Activated T-helper 2 cell treated with anti-CD3 and anti-CD28 coated beads, Interferon-gamma antibody, Interleukin-2, Interleukin-4, amounts not matched to agents 10 μg/mL and 5 μg/mL and 100 μg/mL, durations not matched to agents 14 hours and 24 hours and 36 hours (primary cell): ENCODE measurements at regions of chr3 and their contacts with region 1.

Region 1: GRCh38 chr3:105827959-105828358 is 40.9 kb downstream of the CBLB start:
- DNase-seq: no peak
- H3K4me3 Mint-ChIP-seq: peak overlapping the region; percentile 37
- H3K27ac Mint-ChIP-seq: peak overlapping the region; percentile 100
- H3K4me1 Mint-ChIP-seq: peaks cover 80% of the 10 kb centered on the region
- H3K27me3 Mint-ChIP-seq: no peaks in the 10 kb centered on the region

Region 2: DNA sequence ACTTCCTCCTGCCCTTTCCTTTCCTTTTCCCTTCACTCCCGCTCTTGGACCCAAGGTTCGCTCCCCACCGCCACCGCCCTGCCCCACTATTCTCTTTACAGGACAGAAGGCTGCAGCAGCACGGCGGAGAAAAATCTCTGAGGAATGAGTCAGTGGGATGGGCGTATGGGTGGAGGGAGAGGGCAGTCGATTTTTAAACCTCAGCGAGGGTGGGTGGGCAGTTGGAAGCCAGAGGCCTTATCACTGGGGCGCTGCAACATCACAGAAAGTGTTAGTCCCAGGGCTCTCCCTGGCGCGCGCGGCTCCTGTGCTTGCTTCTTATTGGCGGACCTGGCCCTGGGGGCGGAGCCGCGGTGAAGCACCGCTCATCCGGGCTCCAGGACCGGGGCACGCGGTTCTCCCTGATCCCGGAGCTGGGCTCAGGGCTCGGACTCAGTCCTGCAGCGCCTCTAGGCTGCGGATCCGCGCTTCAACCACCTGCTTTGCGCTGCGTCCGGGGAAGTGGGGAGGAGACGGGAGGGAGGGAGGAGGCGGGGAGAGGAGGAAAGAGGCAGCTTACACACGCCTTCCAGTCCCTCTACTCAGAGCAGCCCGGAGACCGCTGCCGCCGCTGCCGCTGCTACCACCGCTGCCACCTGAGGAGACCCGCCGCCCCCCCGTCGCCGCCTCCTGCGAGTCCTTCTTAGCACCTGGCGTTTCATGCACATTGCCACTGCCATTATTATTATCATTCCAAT is 461.5 kb before region 1 on chr3 and contains the start of gene ALCAM:
- intact Hi-C with region 1: loop called (anchors 5 kb)
- DNase-seq: peak; percentile 77
- H3K4me3 Mint-ChIP-seq: peak within 1 kb of the TSS; percentile 94
- H3K27ac Mint-ChIP-seq: peak within 1 kb of the TSS; percentile 100
- H3K4me1 Mint-ChIP-seq: peaks cover 44% of the 10 kb centered on the region
- H3K27me3 Mint-ChIP-seq: peaks cover 22% of the 10 kb centered on the region
- total RNA-seq, gene ALCAM: 36.7 and 37.3 TPM in 2 replicates

Region 3: DNA sequence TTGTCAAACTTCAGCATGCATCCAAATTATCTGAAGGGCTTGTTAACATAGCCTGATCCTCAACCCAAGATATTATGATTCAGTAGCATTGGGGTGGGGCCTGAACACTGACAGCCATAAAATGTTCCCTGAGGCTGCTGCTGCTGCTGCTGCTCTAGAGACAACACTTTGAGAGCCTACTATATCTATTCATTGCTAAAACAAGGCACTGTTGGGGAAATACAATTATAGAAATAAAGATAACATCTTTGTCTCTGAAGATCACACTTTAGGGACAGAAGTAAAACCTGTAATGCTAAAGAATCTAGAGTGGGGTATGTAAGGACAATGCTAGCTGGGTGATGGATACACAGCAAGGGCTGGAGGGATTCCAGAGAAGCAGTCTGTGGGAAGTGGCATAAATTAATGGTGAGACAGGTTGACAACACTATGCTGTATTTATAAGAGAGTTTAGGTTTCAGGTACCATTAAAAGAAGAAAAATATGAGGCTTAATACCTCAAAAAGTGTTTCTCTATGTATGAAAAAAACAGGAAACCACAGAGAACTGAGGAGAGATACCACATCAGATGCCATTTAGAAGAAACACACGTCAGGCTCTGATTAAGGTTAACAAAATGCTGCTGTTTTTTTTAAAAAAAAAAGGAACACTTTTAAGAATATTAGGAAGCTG is 75.1 kb before region 1 on chr3:
- intact Hi-C with region 1: loop called (anchors 1 kb)
- DNase-seq: peak; percentile 39
- H3K4me3 Mint-ChIP-seq: peak overlapping the region; percentile 48
- H3K27ac Mint-ChIP-seq: peak overlapping the region; percentile 95
- H3K4me1 Mint-ChIP-seq: peaks cover 70% of the 10 kb centered on the region
- H3K27me3 Mint-ChIP-seq: no peaks in the 10 kb centered on the region

Region 4: DNA sequence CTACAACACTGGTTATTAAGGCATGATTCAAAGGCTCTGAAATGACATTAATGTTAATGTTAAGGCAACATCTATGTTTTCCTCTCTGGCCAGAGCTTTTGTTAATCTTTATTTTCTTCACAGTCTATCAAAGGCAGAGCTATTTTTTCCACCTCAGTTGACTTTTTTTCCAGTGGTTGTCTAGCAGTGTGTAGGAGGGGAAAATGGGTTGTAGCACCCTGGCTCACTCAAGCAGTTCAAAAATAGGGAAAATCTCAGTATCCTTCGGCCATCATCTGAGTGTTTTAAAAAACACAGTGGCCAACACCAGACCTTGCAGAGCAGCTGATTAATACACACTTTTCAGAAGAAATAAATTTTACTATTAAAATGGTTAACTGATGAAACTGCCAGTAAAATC is 19.5 kb after region 1 on chr3:
- intact Hi-C with region 1: loop called (anchors 2 kb)
- DNase-seq: no peak
- H3K4me3 Mint-ChIP-seq: peak overlapping the region; percentile 43
- H3K27ac Mint-ChIP-seq: peak overlapping the region; percentile 91
- H3K4me1 Mint-ChIP-seq: peaks cover 53% of the 10 kb centered on the region
- H3K27me3 Mint-ChIP-seq: no peaks in the 10 kb centered on the region

Region 5: DNA sequence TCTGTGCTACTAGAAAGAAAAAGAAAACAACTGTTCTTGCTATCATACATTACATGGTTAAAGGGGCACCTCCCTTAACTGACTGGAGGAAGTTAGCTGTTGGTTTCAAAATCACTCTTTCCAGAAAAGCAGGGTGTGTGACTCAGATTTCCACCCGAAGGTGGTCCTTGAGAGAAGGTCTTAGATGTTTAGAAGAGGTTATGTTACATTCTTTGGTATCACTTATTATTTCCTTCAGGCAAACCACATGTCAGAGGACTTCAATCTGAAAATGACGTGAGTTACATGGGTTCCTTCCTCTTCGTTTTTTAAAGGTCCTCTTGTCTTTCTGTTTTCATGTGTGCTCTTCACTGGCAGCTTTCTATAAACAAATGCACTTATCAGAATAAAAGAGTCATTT is 348.8 kb after region 1 on chr3:
- intact Hi-C with region 1: loop called (anchors 1 kb)
- DNase-seq: peak; percentile 72
- H3K4me3 Mint-ChIP-seq: peak overlapping the region; percentile 57
- H3K27ac Mint-ChIP-seq: peak overlapping the region; percentile 91
- H3K4me1 Mint-ChIP-seq: peaks cover 59% of the 10 kb centered on the region
- H3K27me3 Mint-ChIP-seq: no peaks in the 10 kb centered on the region

Region 6: DNA sequence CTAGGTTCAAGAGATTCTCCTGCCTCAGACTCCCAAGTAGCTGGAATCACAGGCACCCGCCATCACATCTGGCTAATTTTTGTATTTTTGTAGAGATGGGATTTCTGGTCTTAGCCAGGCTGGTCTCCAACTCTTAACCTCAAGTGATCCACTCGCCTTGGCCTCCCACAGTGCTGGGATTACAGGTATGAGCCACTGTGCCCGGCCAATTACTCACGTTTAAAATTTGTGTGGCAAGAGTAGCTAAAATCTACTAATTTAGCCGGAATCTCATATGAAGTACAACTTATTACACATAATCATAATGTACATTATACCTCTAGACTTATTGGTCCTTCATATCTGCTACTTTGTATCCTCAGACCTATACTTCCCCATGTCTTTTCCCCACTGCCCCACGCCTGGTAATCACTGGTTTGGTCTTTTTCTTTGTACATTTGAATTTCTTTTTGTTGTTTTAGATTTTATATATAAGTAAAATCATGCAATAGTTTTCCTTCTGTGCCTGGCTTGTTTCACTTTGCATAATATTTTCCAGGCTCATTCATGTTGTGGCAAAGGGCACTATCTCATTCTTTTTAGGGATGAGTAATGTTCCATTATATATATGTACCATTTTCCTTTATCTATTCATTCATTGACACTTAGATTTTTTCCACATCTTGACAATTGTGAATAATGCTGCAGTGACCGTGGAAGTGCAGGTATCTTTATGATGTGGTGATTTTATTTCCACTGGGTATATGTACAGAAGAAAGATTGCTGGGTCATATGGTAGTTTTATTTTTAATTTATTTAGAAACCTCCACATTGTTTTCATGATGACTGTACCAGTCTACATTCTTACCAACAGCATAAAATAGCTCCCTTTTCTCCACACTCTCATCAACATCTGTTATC is 645.9 kb after region 1 on chr3:
- intact Hi-C with region 1: loop called (anchors 1 kb)
- DNase-seq: no peak
- H3K4me3 Mint-ChIP-seq: no peak overlapping the region
- H3K27ac Mint-ChIP-seq: peak overlapping the region; percentile 84
- H3K4me1 Mint-ChIP-seq: peaks cover 7% of the 10 kb centered on the region
- H3K27me3 Mint-ChIP-seq: no peaks in the 10 kb centered on the region